Activated CD8-positive, alpha-beta memory T cell treated with anti-CD3 and anti-CD28 coated beads, Interleukin-2, amount 10 ng/mL, durations not matched to agents 7 days and 5 days (primary cell): ENCODE measurements at regions of chr16 and their contacts with region 1.

Region 1: GRCh38 chr16:69396187-69397061 is 10.6 kb upstream of the TERF2 start:
- DNase-seq: peak; percentile 81
- ATAC-seq: peak; percentile 76
- H3K4me3 Mint-ChIP-seq: no peak overlapping the region
- H3K27ac Mint-ChIP-seq: peak overlapping the region; percentile 42
- H3K4me1 Mint-ChIP-seq: peaks cover 20% of the 10 kb centered on the region
- H3K27me3 Mint-ChIP-seq: peaks cover 14% of the 10 kb centered on the region

Region 2: DNA sequence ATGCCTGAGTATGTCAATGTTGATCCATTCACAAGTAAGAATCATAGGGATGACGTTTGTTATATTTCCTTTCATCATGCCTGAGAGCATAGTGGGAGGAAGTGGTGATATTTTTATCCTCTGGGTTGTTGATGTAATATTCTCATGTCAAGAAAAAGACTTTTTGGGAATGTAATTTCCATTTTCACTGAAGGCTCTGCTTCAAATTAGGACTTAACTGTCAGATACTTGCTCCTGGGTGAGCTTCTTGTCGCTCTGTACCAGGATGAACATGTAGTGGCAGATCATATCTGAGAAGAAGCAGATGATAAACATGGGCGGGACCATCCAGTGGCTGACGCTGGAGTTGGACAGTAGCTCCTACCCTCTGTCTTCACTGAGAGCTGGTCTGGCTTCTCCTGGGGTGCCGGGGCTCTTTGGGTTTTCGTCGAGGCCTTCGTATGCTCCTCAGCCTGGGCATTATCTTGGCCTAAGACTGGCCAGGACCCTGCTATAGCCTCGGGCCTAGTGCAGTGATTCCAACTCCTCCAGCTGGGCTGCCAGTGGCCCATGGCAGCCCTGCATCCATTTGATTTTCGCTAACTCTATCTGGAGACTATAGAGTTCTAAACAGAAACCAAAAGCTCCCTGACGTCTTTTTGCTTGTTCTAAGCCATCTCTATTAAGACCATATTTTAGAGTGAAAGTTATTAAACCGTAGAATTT is 47.7 kb after region 1 on chr16:
- CTCF ChIA-PET with region 1: interaction called, 12 read pairs
- DNase-seq: peak; percentile 49
- ATAC-seq: peak; percentile 82
- H3K4me3 Mint-ChIP-seq: peak overlapping the region; percentile 75
- H3K27ac Mint-ChIP-seq: peak overlapping the region; percentile 94
- H3K4me1 Mint-ChIP-seq: peaks cover 47% of the 10 kb centered on the region
- H3K27me3 Mint-ChIP-seq: no peaks in the 10 kb centered on the region

Region 3: DNA sequence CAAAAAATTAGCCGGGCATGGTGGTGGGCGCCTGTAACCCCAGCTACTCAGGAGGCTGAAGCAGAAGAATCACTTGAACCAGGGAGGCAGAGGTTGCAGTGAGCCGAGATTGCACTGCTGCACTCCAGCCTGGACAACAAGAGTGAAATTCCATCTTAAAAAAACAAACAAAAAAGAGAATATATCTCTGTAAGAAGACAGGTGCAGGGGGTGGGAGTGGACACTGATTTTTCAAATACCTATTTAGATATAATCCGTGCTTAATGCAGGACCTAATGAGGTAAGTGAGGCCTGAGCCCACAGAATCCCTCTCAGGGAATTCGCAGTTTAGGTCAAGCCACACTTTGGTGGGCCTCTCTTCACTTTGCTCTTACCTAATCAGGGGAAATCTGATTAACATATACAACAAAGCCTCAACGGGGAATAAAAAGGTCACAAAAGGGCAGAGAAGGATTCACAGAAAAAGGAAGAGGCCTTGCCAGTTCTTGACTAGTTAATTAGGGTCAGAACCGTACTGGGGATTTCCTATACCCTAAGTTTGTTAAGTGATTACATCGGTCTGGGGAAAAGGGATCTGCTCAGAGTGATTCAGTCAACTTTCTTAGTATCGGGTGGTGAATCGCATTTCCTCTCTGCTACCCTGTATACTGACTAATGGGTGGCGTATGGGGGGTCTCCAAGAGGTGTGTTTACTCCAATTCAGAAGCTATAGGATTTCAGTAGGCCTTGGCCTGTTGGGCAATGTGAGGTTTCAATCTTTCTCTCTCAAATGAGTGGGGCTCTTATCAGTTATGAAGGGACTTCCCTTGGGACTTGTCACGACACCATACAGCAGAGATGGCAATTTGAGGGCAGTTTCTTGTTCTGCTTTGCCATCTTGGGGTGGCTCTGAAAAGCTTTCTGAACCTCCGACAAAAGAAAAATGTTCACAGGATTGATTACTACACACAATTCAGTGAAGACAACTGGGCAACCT is 167.5 kb after region 1 on chr16:
- CTCF ChIA-PET with region 1: interaction called, 11 read pairs
- DNase-seq: peak; percentile 72
- ATAC-seq: peak; percentile 40
- H3K4me3 Mint-ChIP-seq: peak overlapping the region; percentile 89
- H3K27ac Mint-ChIP-seq: peak overlapping the region; percentile 94
- H3K4me1 Mint-ChIP-seq: peaks cover 39% of the 10 kb centered on the region
- H3K27me3 Mint-ChIP-seq: no peaks in the 10 kb centered on the region

Region 4: GRCh38 chr16:69726296-69727060 is 330.1 kb after region 1 on chr16 and contains the start of gene NQO1:
- CTCF ChIA-PET with region 1: interaction called, 11 read pairs
- DNase-seq: peak; percentile 97
- ATAC-seq: peak; percentile 99
- H3K4me3 Mint-ChIP-seq: peak within 1 kb of the TSS; percentile 86
- H3K27ac Mint-ChIP-seq: peak within 1 kb of the TSS; percentile 93
- H3K4me1 Mint-ChIP-seq: peaks cover 54% of the 10 kb centered on the region
- H3K27me3 Mint-ChIP-seq: no peaks in the 10 kb centered on the region
- total RNA-seq, gene NQO1: 22.6 to 27.2 TPM

Region 5: GRCh38 chr16:69754469-69755310 is 358.3 kb after region 1 on chr16 and contains the start of gene NOB1:
- CTCF ChIA-PET with region 1: interaction called, 28 read pairs
- DNase-seq: peak; percentile 98
- ATAC-seq: peak; percentile 96
- H3K4me3 Mint-ChIP-seq: peak within 1 kb of the TSS; percentile 100
- H3K27ac Mint-ChIP-seq: peak within 1 kb of the TSS; percentile 97
- H3K4me1 Mint-ChIP-seq: peaks cover 31% of the 10 kb centered on the region
- H3K27me3 Mint-ChIP-seq: no peaks in the 10 kb centered on the region
- total RNA-seq, gene NOB1: 61.4 to 84.2 TPM